HEK293 (cell line): ENCODE measurements at regions of chr20 and their contacts with region 1.

Region 1: GRCh38 chr20:1437235-1437904 is 29.3 kb downstream of the NSFL1C start:
- H3K4me3 ChIP-seq: no peak overlapping the region
- H3K27ac ChIP-seq: no peak overlapping the region
- H3K4me1 ChIP-seq: no peaks in the 10 kb centered on the region
- CTCF ChIP-seq: peak; percentile 88

Region 2: DNA sequence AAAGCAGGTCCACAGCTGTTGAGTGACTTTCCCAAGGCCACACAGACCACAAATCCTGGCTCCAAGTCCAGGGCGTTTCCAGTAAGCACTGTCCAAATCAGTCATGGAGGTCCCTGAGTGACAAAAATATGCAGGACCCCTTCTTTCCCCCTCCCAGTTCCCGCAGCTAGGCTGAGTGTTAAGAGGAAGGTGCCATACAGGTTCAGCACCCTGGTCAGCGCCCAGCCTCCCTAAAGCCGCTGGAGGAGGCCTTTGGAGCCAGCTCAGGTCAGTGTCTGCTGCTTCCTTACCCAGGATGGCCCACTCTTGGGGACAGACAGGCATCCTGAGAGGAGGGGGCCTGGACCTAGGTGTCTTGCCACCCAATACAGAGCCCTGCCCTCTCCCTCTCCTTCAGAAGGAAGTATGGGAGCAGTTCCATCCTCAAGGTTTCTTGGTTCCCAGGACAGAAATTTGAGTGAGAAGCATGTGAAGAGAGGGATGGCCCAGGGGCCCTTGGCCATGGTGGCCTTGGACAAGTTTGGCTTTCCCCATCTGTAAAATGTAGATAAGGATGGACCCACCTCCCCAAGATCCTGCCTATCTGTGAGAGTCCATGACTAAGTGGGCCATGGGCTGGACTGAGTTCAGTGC is 265.8 kb before region 1 on chr20:
- CTCF ChIA-PET with region 1: no interaction called
- POLR2A ChIA-PET with region 1: no interaction called
- H3K4me3 ChIP-seq: no peak overlapping the region
- H3K27ac ChIP-seq: no peak overlapping the region
- H3K4me1 ChIP-seq: no peaks in the 10 kb centered on the region
- CTCF ChIP-seq: no peak

Region 3: DNA sequence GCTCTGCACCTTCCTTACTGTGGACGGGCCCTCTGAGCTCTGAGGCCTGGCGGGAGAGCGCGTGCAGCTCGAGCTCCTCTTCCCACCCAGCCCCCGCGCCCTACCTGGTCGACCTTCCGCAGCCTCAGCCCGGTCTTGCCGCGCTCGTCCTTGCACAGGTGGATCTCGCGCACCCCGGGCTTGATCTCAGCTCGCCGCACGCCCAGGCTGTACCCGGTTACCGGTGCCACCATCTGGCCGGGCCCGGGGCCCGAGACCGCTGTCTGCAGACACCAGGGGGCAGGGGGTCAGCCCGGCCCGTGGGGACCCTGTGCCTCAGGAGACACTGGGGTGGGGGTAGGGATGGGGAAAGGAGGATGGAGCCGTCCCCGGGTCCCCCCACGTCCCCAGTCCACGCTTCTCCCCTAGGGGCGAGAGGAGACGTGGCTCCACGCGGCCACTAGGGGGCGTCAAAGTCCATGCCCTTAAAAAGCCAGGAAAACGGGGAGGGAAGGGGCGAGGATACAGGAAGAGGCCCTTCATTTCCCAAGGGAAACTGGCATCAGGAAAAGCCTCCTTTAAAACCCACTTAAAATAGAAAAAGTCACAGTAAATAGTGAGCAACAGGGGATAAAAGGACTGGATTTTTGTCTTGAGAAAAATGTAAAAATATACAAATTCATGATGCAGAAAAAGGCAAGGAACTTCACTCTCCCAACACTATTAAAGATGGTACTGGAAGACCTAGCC is 124.0 kb before region 1 on chr20:
- CTCF ChIA-PET with region 1: interaction called, 56 read pairs
- POLR2A ChIA-PET with region 1: no interaction called
- H3K4me3 ChIP-seq: peak overlapping the region; percentile 16; the same call in 1 of the 2 replicates
- H3K27ac ChIP-seq: no peak overlapping the region; the same call in 1 of the 2 replicates
- H3K4me1 ChIP-seq: 0 out of 2 replicates have a peak, but pooled peaks cover 2% of the 10 kb centered on the region
- CTCF ChIP-seq: peak; percentile 50

Region 4: GRCh38 chr20:1392823-1393506 is 44.4 kb before region 1 on chr20 and contains the start of gene FKBP1A:
- CTCF ChIA-PET with region 1: interaction called, 17 read pairs
- POLR2A ChIA-PET with region 1: no interaction called
- H3K4me3 ChIP-seq: peak within 1 kb of the TSS; percentile 69
- H3K27ac ChIP-seq: peak within 1 kb of the TSS; percentile 77; the same call in 1 of the 2 replicates
- H3K4me1 ChIP-seq: peaks cover 32% of the 10 kb centered on the region
- CTCF ChIP-seq: no peak

Region 5: DNA sequence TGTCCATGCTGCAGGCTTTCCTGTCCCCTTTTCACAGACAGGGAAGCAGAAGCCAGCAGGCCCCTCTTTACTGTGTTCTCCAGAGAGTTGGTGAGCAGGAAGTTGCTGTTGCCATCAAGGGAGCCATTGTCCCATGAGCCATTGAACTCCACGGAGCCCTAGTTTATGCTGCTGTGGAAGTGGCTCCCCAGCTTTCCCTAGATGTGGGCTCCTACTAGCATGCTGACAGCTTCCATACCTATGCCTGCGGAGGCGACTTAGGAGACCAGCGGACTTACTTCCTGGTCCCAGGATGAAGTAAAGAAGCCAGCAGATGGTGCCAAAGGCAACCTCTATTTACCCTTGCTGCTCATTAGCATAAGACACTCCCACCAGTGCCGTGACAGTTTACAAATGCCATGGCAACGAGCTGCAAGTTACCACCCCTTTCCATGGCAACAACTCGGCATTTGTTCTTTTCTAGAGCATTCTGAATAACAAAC is 13.7 kb before region 1 on chr20:
- CTCF ChIA-PET with region 1: interaction called, 44 read pairs
- POLR2A ChIA-PET with region 1: no interaction called
- H3K4me3 ChIP-seq: no peak overlapping the region
- H3K27ac ChIP-seq: no peak overlapping the region
- H3K4me1 ChIP-seq: peaks cover 5% of the 10 kb centered on the region; the same call in 1 of the 2 replicates
- CTCF ChIP-seq: no peak

Region 6: GRCh38 chr20:1450926-1451491 is 13.6 kb after region 1 on chr20:
- CTCF ChIA-PET with region 1: interaction called, 29 read pairs
- POLR2A ChIA-PET with region 1: no interaction called
- H3K4me3 ChIP-seq: no peak overlapping the region
- H3K27ac ChIP-seq: no peak overlapping the region
- H3K4me1 ChIP-seq: no peaks in the 10 kb centered on the region
- CTCF ChIP-seq: no peak

Region 7: GRCh38 chr20:1466211-1467081 is 29.1 kb after region 1 on chr20 and contains the start of gene NSFL1C:
- CTCF ChIA-PET with region 1: interaction called, 13 read pairs
- POLR2A ChIA-PET with region 1: no interaction called
- H3K4me3 ChIP-seq: peak within 1 kb of the TSS; percentile 87
- H3K27ac ChIP-seq: peak within 1 kb of the TSS; percentile 89
- H3K4me1 ChIP-seq: peaks cover 8% of the 10 kb centered on the region
- CTCF ChIP-seq: peak; percentile 63